ENCODE measurements at regions of chr4 and their contacts with region 1.

Region 1: DNA sequence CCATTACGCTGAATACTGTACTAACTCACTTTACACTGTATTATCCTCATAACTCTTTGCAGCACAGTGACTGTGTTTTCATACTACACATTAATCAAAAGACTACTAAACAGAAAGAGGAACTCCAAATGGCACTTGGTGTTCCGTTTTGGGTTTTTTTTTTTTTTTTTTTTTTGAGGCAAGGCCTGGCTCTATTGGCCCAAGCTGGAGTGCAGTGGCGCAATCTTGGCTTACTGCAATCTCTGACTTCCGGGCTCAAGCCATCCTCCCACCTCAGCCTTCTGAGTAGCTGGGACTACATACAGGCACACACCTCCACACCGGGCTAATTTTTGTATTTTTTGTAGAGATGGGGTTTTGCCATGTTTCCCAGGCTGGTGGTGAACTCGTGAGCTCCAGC is 10.7 kb downstream of the KLHL8 start:
- DNase-seq: peak; percentile 82 to 95 (median 93)
- H3K4me3 ChIP-seq: peak overlapping the region in 5 of 7 experiments; percentile 20 to 74 (median 42)
- H3K27ac ChIP-seq: peak overlapping the region in 1 of 2 experiments; percentile 22
- H3K4me1 ChIP-seq: peaks cover 4 to 22% (median 9%) of the 10 kb centered on the region in 4 experiments
- H3K27me3 ChIP-seq: no peaks in the 10 kb centered on the region

Region 2: GRCh38 chr4:87220094-87220822 is 10.6 kb after region 1 on chr4 and contains the start of gene KLHL8:
- CTCF ChIA-PET with region 1: interaction called, 11 read pairs
- POLR2A ChIA-PET with region 1: interaction called, 8 read pairs
- DNase-seq: peak; percentile 87 to 94 (median 92)
- H3K4me3 ChIP-seq: peak within 1 kb of the TSS; percentile 78 to 99 (median 89)
- H3K27ac ChIP-seq: peak within 1 kb of the TSS; percentile 33 to 89
- H3K4me1 ChIP-seq: peaks cover 6 to 18% (median 15%) of the 10 kb centered on the region in 4 experiments
- H3K27me3 ChIP-seq: no peaks in the 10 kb centered on the region